GM10248 (cell line): ENCODE measurements at regions of chr12 and their contacts with region 1.

Region 1: DNA sequence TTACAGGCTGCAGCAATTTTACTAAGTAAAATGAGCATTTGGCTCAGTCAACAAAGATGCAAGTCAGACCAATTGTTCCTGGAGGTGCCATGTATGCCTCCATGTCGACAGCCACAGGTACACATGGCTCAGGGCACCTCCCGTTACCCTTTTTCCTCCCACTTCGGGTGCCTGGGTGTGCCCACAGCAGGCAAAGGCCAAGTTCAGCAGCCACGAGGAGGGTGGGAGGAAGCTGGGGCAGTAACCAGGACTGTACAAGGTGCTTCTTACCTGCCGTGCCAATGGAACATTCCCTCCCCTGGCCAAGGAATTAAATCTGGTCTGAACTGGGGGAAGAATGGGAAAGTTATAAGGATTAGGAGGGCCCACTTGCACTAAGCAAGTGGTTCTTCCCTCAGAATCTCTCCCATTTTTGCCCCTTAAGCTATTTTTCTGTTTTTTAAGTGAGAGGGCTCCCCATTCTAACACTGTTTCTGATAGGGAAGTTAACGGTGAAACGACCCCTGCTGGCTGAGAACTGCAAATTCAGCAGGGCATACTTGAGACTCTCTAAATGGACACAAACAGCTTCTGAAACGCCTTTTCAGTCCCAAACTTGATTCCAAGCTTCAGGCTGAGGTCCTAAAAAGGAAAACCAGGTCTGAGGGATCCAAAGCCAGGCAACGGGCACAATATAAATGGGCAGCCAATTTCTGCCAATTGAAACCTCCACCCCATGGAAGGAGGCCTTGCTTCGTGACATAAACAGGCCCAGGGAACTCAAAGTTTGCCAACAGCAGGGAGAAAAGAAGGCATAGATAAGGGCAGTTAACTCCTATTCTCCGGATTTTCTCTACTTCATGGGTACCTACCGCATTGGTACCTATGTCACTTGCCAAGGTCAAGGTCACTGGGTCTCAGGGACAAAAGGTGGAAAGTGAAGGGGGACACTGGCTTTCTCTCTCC is 24.8 kb downstream of the CLECL1 start:
- DNase-seq: peak; percentile 19
- CTCF ChIP-seq: peak; percentile 71

Region 2: GRCh38 chr12:9331218-9331626 is 376.9 kb before region 1 on chr12:
- CTCF ChIA-PET with region 1: interaction called, 19 read pairs
- POLR2A ChIA-PET with region 1: no interaction called
- DNase-seq: peak; percentile 67
- CTCF ChIP-seq: peak; percentile 96

Region 3: GRCh38 chr12:9634177-9634803 is 73.8 kb before region 1 on chr12:
- CTCF ChIA-PET with region 1: interaction called, 20 read pairs
- POLR2A ChIA-PET with region 1: no interaction called
- DNase-seq: peak; percentile 63
- CTCF ChIP-seq: peak; percentile 71

Region 4: GRCh38 chr12:9669534-9669933 is 38.6 kb before region 1 on chr12 and contains the start of gene CLEC2D:
- CTCF ChIA-PET with region 1: interaction called, 20 read pairs
- POLR2A ChIA-PET with region 1: interaction called, 5 read pairs
- DNase-seq: peak; percentile 57
- CTCF ChIP-seq: no peak

Region 5: GRCh38 chr12:9687228-9687627 is 20.9 kb before region 1 on chr12:
- CTCF ChIA-PET with region 1: interaction called, 20 read pairs
- POLR2A ChIA-PET with region 1: no interaction called
- DNase-seq: no peak
- CTCF ChIP-seq: no peak

Region 6: GRCh38 chr12:9721394-9722092 is 13.4 kb after region 1 on chr12:
- CTCF ChIA-PET with region 1: interaction called, 26 read pairs
- POLR2A ChIA-PET with region 1: no interaction called
- DNase-seq: peak; percentile 47
- CTCF ChIP-seq: no peak

Region 7: GRCh38 chr12:9797722-9798619 is 89.8 kb after region 1 on chr12:
- CTCF ChIA-PET with region 1: no interaction called
- POLR2A ChIA-PET with region 1: no interaction called
- DNase-seq: peak; percentile 41
- CTCF ChIP-seq: peak; percentile 87